ENCODE measurements at regions of chr12 and their contacts with region 1.

Region 1: GRCh38 chr12:4763549-4763948 is 43.3 kb downstream of the GALNT8 start:
- DNase-seq: no peak
- H3K4me3 ChIP-seq: no peak overlapping the region
- H3K27ac ChIP-seq: no peak overlapping the region
- H3K4me1 ChIP-seq: no peaks in the 10 kb centered on the region
- H3K27me3 ChIP-seq: peaks cover 75% of the 10 kb centered on the region
- CTCF ChIP-seq: no peak

Region 2: GRCh38 chr12:4538207-4539160 is 225.1 kb before region 1 on chr12 and contains the start of gene RAD51AP1:
- CTCF ChIA-PET with region 1: no interaction called
- POLR2A ChIA-PET with region 1: no interaction called
- intact Hi-C with region 1: loop called (anchors 5 kb)
- DNase-seq: peak; percentile 93 to 96
- H3K4me3 ChIP-seq: peak within 1 kb of the TSS; percentile 77
- H3K27ac ChIP-seq: peak within 1 kb of the TSS; percentile 41; the same call in 1 of the 2 replicates
- H3K4me1 ChIP-seq: peaks cover 20% of the 10 kb centered on the region
- H3K27me3 ChIP-seq: no peaks in the 10 kb centered on the region
- CTCF ChIP-seq: no peak
- total RNA-seq, gene RAD51AP1: 50.1 and 54.7 TPM in 2 replicates

Region 3: GRCh38 chr12:4591180-4591687 is 172.3 kb before region 1 on chr12:
- CTCF ChIA-PET with region 1: no interaction called
- POLR2A ChIA-PET with region 1: no interaction called
- intact Hi-C with region 1: no loop called
- DNase-seq: peak in 1 of 2 experiments; percentile 31
- H3K4me3 ChIP-seq: no peak overlapping the region
- H3K27ac ChIP-seq: no peak overlapping the region
- H3K4me1 ChIP-seq: no peaks in the 10 kb centered on the region
- H3K27me3 ChIP-seq: peaks cover 99% of the 10 kb centered on the region
- CTCF ChIP-seq: no peak

Region 4: DNA sequence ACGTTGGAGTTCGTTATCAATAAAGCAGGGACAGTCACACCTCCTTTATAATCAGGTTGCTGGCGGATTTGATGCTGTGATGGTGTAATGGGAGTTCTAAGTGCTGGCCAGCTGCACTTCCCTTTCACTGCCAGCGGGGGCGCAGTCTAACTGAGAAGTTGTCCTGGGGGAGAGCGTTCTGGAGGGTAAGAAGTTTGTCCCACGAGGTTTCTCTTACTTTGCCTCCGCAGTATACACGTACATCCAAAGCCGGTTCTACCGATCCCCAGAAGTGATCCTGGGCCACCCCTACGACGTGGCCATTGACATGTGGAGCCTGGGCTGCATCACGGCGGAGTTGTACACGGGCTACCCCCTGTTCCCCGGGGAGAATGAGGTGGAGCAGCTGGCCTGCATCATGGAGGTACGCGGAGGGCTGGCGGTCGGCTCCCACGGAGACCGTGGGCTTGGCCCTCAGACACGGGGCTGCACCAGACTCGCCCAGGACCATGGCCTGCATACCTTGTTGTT is 158.8 kb before region 1 on chr12:
- CTCF ChIA-PET with region 1: no interaction called
- POLR2A ChIA-PET with region 1: no interaction called
- intact Hi-C with region 1: loop called (anchors 2 kb)
- DNase-seq: peak; percentile 82 to 84
- H3K4me3 ChIP-seq: peak overlapping the region; percentile 79
- H3K27ac ChIP-seq: no peak overlapping the region
- H3K4me1 ChIP-seq: peaks cover 9% of the 10 kb centered on the region; the same call in 1 of the 2 replicates
- H3K27me3 ChIP-seq: peaks cover 42% of the 10 kb centered on the region
- CTCF ChIP-seq: peak; percentile 100

Region 5: GRCh38 chr12:4819654-4820053 is 56.1 kb after region 1 on chr12:
- CTCF ChIA-PET with region 1: no interaction called
- POLR2A ChIA-PET with region 1: no interaction called
- intact Hi-C with region 1: no loop called
- DNase-seq: no peak
- H3K4me3 ChIP-seq: no peak overlapping the region
- H3K27ac ChIP-seq: no peak overlapping the region
- H3K4me1 ChIP-seq: no peaks in the 10 kb centered on the region
- H3K27me3 ChIP-seq: peaks cover 96% of the 10 kb centered on the region
- CTCF ChIP-seq: no peak

Region 6: DNA sequence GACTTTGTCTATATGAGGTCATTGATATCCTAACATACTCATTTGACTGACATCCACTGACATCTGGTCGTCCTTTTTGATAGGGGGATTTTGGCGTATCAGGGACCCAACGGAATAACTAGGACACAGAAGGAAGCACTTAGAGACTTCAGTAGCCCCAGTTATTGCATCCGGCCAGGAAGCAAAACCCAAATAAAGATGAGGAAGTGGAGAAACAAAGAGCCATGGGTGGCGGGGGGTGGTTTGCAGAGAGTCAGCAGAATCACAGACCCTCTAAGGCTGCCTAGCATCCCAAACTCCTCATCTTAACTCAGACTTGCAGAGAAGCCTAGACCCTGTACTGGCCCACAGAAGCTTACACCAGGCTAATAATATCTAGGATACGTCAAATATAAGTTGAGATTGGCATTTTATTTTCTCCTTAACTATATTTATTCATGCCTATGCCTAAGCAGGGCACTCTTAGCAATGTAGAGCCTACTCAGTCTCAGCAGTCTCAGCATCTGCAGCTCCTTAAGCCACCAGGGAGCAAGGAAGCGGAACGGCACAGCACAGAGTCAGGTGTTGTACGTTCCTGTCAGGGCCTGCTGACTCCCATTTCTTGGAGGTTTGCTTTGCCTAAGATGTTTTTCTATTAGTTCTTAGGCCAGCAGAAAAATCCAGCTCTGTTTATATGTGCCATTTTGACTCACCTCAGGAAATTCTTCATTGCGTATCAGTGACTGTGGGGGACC is 191.2 kb after region 1 on chr12:
- CTCF ChIA-PET with region 1: interaction called, 15 read pairs
- POLR2A ChIA-PET with region 1: no interaction called
- intact Hi-C with region 1: no loop called
- DNase-seq: no peak
- H3K4me3 ChIP-seq: no peak overlapping the region
- H3K27ac ChIP-seq: no peak overlapping the region
- H3K4me1 ChIP-seq: no peaks in the 10 kb centered on the region
- H3K27me3 ChIP-seq: peaks cover 82% of the 10 kb centered on the region
- CTCF ChIP-seq: no peak

Region 7: DNA sequence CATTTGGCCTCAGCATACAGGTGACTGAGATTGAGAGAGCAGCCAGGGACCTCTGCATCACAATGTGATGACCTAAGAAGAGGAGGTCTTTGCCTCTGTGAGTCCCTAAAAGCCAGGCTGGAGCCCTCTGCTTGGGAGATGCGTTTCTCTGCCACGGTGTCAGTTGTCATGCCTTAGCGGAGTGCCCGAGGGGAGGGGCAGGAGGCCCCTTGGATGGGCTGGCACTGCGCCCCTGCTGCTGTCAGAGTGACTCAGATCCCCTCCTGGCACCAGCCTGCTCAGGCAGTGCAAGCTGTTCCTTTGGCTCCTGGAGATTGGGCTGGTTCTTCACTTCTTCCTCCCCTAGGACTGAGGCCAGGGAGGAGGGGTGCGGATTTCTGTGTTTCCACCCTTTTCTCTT is 215.2 kb after region 1 on chr12:
- CTCF ChIA-PET with region 1: no interaction called
- POLR2A ChIA-PET with region 1: no interaction called
- intact Hi-C with region 1: no loop called
- DNase-seq: no peak
- H3K4me3 ChIP-seq: no peak overlapping the region
- H3K27ac ChIP-seq: no peak overlapping the region
- H3K4me1 ChIP-seq: no peaks in the 10 kb centered on the region
- H3K27me3 ChIP-seq: peaks cover 63% of the 10 kb centered on the region
- CTCF ChIP-seq: no peak

Measured in PC-9 (cell line).